Gastrocnemius medialis (tissue), 4 donors: ENCODE measurements at regions of chr11 and their contacts with region 1.

Region 1: GRCh38 chr11:32052218-32052617 is 38.7 kb upstream of the RCN1 start:
- DNase-seq: peak in 1 of 2 donors; percentile 15
- ATAC-seq: no peak
- H3K4me3 ChIP-seq: no peak overlapping the region
- H3K27ac ChIP-seq: no peak overlapping the region
- H3K4me1 ChIP-seq: no peaks in the 10 kb centered on the region
- H3K27me3 ChIP-seq: peaks cover 0 to 3% (median 0%) of the 10 kb centered on the region in 3 donors
- CTCF ChIP-seq: peak; percentile 22 to 77 (median 59)
- POLR2A ChIP-seq: no peak

Region 2: GRCh38 chr11:32090545-32091373 is 38.5 kb after region 1 on chr11 and contains the start of gene RCN1:
- in situ Hi-C with region 1: no loop called
- intact Hi-C with region 1: no loop called
- DNase-seq: peak; percentile 17 to 22
- ATAC-seq: peak; percentile 68 to 72
- H3K4me3 ChIP-seq: peak within 1 kb of the TSS; percentile 65 to 86 (median 72)
- H3K27ac ChIP-seq: peak within 1 kb of the TSS; percentile 72 to 83 (median 78)
- H3K4me1 ChIP-seq: peaks cover 0 to 12% of the 10 kb centered on the region in 2 donors
- H3K27me3 ChIP-seq: no peaks in the 10 kb centered on the region
- CTCF ChIP-seq: no peak
- POLR2A ChIP-seq: peak; percentile 37 to 68
- total RNA-seq, gene RCN1: 14.7 to 27.0 (median 18.1) TPM

Region 3: GRCh38 chr11:32176223-32176934 is 124.2 kb after region 1 on chr11:
- in situ Hi-C with region 1: loop called (anchors 5 kb)
- intact Hi-C with region 1: loop called (anchors 1 kb)
- DNase-seq: peak; percentile 49 to 60
- ATAC-seq: peak; percentile 64 to 79
- H3K4me3 ChIP-seq: no peak overlapping the region
- H3K27ac ChIP-seq: no peak overlapping the region
- H3K4me1 ChIP-seq: peaks cover 5 to 15% of the 10 kb centered on the region in 2 donors
- H3K27me3 ChIP-seq: no peaks in the 10 kb centered on the region
- CTCF ChIP-seq: peak; percentile 71 to 84 (median 76)
- POLR2A ChIP-seq: no peak